ENCODE measurements at regions of chr10 and their contacts with region 1.

Region 1: DNA sequence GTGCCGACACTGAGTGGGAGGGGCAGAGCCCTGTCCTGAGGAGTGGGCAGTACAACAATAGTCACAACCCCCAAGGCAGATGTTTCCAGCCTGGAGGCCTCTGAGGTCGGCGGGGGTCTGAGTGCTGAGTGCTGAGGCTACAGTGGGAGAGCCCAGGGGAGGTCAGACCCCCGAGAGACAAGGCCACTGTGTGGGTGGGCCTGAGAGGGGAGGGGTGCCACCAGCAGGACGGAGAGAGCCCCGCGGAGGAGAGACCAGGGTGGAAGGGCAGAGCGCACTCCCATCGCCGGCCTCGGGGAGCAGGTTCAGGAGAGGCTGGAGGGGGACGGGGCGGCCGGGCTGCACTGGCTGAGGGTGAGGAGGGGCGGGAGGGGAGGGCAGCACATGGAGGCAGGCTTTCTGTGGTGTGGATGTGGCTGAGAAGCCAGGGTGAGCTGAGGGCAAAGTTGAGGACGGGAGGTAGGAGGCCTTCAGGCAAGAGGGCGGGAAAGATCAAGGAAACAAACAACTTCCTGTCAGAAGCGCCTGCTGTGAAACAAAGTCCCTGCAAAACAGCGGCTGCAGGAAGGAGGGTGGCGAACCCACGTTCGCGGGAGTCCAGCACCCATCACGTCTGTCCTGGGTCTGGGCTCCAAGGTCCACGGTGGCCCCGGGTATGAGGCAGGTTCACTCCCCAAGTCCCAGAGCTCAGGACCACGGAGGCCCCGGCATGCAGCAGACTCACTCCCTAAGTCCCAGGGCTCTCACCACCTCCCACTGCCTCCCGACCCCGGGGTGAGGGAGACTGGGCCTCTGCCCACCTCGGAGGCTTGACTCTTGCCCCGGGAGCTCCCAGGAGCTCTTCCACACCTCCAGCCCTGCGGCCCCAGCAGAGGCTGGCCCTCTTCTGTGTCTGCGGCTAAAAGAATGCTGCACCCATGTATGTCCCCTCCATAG is 76.8 kb upstream of the NKX6-2 start:
- DNase-seq: peak in 1 of 2 experiments; percentile 50
- H3K4me3 ChIP-seq: no peak overlapping the region
- H3K27ac ChIP-seq: no peak overlapping the region
- H3K4me1 ChIP-seq: peaks cover 0 to 6% (median 3%) of the 10 kb centered on the region in 4 experiments; a peak in 5 of 7 replicates
- H3K27me3 ChIP-seq: no peaks in the 10 kb centered on the region
- CTCF ChIP-seq: no peak
- EP300 ChIP-seq: no peak
- POLR2A ChIP-seq: no peak
- RAD21 ChIP-seq: no peak

Region 2: DNA sequence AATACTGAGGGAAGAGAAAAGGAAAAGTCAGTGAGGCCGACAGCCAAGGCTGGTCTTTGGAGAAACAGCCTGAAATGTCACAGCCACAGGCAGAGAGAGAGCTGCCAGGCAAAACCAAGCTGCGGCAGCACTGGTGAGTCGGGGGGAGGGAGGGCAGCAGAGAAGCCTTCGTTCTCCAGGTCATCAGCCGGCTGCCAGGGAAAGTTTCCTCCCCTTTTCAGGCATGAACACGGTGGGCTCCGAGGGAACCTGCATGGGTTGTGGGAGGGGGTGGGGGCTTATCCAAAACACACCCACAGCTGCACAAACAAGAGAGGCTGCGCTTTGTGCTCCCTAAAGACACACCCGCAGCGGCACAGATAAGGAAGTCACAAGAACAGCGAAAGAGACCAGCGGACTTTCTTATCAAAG is 14.5 kb before region 1 on chr10:
- CTCF ChIA-PET with region 1: interaction called, 18 read pairs
- POLR2A ChIA-PET with region 1: no interaction called
- DNase-seq: no peak
- H3K4me3 ChIP-seq: no peak overlapping the region
- H3K27ac ChIP-seq: no peak overlapping the region
- H3K4me1 ChIP-seq: no peaks in the 10 kb centered on the region; a peak in 1 of 7 replicates
- H3K27me3 ChIP-seq: no peaks in the 10 kb centered on the region
- CTCF ChIP-seq: no peak
- EP300 ChIP-seq: no peak
- POLR2A ChIP-seq: no peak
- RAD21 ChIP-seq: no peak

Region 3: DNA sequence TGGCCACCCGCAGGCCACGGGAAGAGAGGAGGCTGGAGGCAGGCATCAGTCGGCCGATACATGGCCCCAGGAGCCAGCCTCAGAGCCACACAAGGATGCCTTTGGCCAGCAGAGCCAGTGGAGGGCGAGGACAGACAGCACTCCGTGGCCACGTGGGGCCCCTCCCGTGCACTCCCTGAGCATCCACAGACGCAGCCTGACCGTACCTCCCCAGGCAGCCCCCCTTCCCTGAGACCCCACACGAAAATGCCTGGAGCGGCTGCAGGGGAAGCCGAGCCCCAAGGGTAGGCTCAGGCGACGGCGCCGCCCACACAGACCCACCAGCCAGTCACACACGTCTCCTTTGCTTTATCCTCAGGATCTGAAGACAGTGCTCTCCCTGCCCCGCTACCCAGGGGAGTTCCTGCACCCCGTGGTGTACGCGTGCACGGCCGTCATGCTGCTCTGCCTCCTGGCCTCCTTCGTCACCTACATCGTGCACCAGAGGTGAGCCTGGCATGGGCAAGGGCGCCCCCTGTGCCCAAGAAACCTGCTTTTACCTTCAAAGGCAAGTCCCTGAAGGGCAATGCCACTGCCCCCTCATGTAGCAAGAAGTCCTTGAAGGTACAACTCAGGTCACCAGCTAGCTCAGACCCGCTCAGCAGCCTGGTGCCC is 234.0 kb after region 1 on chr10:
- CTCF ChIA-PET with region 1: no interaction called
- POLR2A ChIA-PET with region 1: no interaction called
- DNase-seq: no peak
- H3K4me3 ChIP-seq: no peak overlapping the region
- H3K27ac ChIP-seq: no peak overlapping the region
- H3K4me1 ChIP-seq: peaks cover 5 to 13% (median 8%) of the 10 kb centered on the region in 4 experiments
- H3K27me3 ChIP-seq: no peaks in the 10 kb centered on the region; a peak in 1 of 7 replicates
- CTCF ChIP-seq: peak in 2 of 3 experiments; percentile 51 to 64; a peak in 3 of 4 replicates
- EP300 ChIP-seq: no peak
- POLR2A ChIP-seq: no peak
- RAD21 ChIP-seq: peak; percentile 61 to 65

Measured in H1 (cell line).